Panc1 (cell line): ENCODE measurements at regions of chr1 and their contacts with region 1.

Region 1: GRCh38 chr1:22704440-22705067 is 6.1 kb upstream of the EPHB2 start:
- DNase-seq: peak; percentile 61
- ATAC-seq: peak; percentile 97
- H3K4me3 ChIP-seq: no peak overlapping the region
- H3K27ac ChIP-seq: no peak overlapping the region
- H3K4me1 ChIP-seq: no peaks in the 10 kb centered on the region
- H3K27me3 ChIP-seq: no peaks in the 10 kb centered on the region
- CTCF ChIP-seq: peak; percentile 94

Region 2: GRCh38 chr1:22739648-22740385 is 35.3 kb after region 1 on chr1:
- CTCF ChIA-PET with region 1: no interaction called
- POLR2A ChIA-PET with region 1: no interaction called
- in situ Hi-C with region 1: no loop called
- intact Hi-C with region 1: no loop called
- DNase-seq: peak; percentile 80
- ATAC-seq: peak; percentile 91
- H3K4me3 ChIP-seq: peak overlapping the region in 1 of 2 experiments; percentile 25; a peak in 2 of 4 replicates
- H3K27ac ChIP-seq: peak overlapping the region; percentile 83
- H3K4me1 ChIP-seq: peaks cover 33% of the 10 kb centered on the region
- H3K27me3 ChIP-seq: no peaks in the 10 kb centered on the region
- CTCF ChIP-seq: no peak

Region 3: GRCh38 chr1:22889213-22889827 is 184.8 kb after region 1 on chr1:
- CTCF ChIA-PET with region 1: interaction called, 6 read pairs
- POLR2A ChIA-PET with region 1: no interaction called
- in situ Hi-C with region 1: no loop called
- intact Hi-C with region 1: loop called (anchors 10 kb)
- DNase-seq: peak; percentile 53
- ATAC-seq: peak; percentile 71
- H3K4me3 ChIP-seq: no peak overlapping the region
- H3K27ac ChIP-seq: no peak overlapping the region
- H3K4me1 ChIP-seq: no peaks in the 10 kb centered on the region
- H3K27me3 ChIP-seq: no peaks in the 10 kb centered on the region
- CTCF ChIP-seq: peak; percentile 90

Region 4: DNA sequence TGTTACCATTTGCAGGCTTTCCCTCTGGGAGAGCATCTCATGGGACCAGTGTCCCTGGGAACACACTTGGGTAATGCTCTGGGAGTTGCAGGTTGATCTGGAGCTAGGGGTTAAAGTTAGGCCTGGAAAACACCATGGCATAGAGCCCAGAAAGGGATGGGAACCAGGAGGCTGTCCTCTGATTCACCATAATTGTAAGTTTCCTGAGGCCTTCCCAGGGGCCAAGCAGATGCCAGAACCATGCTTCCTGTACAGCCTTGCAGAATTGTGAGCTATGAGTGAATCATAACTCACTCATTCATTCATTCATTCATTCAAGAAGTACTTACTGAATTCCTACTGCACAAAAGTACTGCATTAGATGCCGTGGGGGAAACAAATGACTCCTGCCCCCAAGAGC is 218.1 kb after region 1 on chr1:
- CTCF ChIA-PET with region 1: no interaction called
- POLR2A ChIA-PET with region 1: no interaction called
- in situ Hi-C with region 1: no loop called
- intact Hi-C with region 1: loop called (anchors 10 kb)
- DNase-seq: no peak
- ATAC-seq: no peak
- H3K4me3 ChIP-seq: no peak overlapping the region
- H3K27ac ChIP-seq: no peak overlapping the region
- H3K4me1 ChIP-seq: no peaks in the 10 kb centered on the region
- H3K27me3 ChIP-seq: no peaks in the 10 kb centered on the region
- CTCF ChIP-seq: no peak